ENCODE measurements at regions of chr1 and their contacts with region 1.

Region 1: GRCh38 chr1:19861034-19861433 is 21.2 kb upstream of the OTUD3 start:
- DNase-seq: peak in 1 of 2 experiments; percentile 36
- H3K4me3 ChIP-seq: no peak overlapping the region
- H3K27ac ChIP-seq: no peak overlapping the region
- H3K4me1 ChIP-seq: no peaks in the 10 kb centered on the region
- H3K27me3 ChIP-seq: no peaks in the 10 kb centered on the region
- CTCF ChIP-seq: no peak

Region 2: DNA sequence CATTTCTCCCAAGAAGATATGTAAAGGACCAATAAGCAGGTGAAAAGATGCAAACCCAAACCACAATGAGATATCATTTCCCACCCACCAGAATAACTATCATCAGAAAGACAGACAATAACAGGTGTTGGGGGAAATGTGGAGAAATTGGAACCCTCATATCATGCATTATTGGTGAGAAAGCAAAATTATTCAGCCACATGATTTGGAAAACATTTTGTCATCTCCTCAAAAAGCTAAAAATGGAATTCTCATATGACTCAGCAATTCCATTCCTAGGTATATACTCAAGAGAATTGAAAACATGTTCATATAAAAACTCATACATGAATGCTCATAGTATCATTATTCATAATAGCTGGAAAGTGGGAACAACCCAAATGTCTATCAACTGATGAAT is 20.8 kb before region 1 on chr1:
- CTCF ChIA-PET with region 1: interaction called, 18 read pairs
- POLR2A ChIA-PET with region 1: no interaction called
- intact Hi-C with region 1: no loop called
- DNase-seq: no peak
- H3K4me3 ChIP-seq: no peak overlapping the region
- H3K27ac ChIP-seq: no peak overlapping the region
- H3K4me1 ChIP-seq: no peaks in the 10 kb centered on the region
- H3K27me3 ChIP-seq: no peaks in the 10 kb centered on the region
- CTCF ChIP-seq: no peak

Measured in PC-9 (cell line).